Posterior vena cava (tissue), 2 donors: ENCODE measurements at regions of chr10 and their contacts with region 1.

Region 1: GRCh38 chr10:96043033-96043932 is at the start of gene CCNJ:
- DNase-seq: peak; percentile 96
- total RNA-seq, gene CCNJ: 4.8 to 6.2 TPM

Region 2: DNA sequence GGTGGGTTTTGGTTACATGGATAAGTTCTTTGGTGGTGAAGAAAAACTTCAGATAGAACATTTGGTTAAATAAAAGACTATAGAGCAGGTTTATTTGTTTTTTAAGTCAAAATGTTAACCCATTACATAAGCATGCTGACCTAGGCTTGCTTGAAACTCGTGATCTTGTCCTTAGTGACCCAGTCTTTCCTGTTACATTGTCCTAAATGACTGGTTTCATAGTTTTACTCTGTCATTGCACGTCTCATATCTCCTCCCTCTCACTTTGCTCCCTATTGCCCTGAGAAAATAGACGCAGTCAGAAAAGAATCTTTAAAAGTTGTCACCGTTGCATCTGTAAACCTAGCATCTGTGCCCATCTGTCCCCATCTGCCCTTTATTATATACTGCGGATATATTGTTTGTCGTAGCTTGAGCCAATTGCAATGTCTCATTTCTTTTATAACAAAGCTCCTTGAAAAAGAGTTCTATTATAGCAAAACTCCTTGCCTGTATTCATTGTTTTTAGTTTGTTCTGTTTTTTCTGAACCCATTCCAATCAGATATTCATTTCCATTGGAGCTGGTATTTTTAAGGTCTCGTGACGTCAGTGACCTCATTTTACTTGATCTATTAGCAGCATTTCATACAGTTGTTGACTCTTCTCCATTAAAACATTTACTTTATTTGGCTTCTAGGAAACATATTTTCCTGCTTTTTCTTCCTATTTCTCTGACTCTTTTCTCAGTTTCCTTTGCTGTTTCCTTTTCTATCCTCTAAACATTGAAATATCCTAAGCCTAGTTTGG is 1440.4 kb before region 1 on chr10:
- intact Hi-C with region 1: loop called in 1 of 2 experiments (anchors 5 kb)
- DNase-seq: no peak

Region 3: DNA sequence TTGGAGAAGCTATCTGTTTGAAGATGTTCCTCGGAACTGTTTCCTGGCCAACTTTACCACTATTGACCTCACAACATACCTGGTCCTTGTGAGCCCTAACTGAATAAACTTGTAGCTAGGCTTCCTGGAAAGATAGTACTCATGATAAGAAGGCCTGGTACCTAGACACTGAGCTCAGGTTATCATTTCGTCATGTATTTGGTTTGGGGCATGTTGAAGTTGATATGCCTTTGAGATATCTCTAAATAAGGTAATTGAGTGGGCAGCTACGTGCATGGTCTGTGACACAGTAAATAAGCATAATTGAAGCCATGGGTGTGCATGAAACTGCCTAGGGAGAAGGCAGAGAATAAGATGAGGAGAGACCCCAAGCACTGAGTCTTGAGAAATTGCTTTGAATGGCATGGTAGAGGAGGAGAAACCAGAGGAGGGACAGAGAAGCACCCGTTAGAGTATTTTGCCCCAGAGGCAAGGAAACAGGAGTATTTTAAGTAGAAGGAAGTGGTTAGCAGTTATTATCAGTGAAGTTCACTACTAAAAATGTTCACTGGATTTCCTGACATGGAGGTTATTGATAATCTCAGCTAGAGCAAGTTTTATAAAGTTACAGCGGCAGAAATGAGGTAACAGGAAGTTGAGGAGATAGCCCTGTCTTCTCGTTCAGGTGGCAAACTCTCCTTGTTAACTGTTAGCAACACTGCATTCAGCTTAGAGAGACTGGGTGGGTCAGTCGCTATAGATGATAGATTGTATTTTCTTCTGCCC is 79.9 kb before region 1 on chr10:
- intact Hi-C with region 1: no loop called
- DNase-seq: no peak

Region 4: DNA sequence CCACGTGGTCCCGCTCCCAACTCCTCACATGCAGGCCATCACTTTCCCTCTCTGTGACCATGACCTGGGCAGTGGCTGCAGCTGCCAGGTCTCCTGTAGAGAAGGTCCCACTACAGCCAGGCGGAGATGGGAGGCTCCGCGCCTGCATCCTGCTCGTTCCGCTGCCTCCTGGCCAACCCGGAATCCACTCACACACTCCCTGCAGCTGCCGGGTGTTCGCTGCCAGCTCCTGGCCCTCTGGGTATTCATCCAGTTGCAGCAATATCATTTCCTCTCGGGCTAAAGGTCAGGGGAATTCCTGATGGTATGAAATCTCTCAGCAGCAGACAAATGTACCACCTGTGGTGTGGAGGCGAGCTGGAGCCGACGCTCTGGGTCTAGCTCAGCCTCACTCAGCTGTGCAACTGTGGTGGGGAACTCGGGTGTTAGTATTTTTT is 404.8 kb after region 1 on chr10:
- intact Hi-C with region 1: no loop called
- DNase-seq: no peak